ENCODE measurements at regions of chr10 and their contacts with region 1.

Region 1: DNA sequence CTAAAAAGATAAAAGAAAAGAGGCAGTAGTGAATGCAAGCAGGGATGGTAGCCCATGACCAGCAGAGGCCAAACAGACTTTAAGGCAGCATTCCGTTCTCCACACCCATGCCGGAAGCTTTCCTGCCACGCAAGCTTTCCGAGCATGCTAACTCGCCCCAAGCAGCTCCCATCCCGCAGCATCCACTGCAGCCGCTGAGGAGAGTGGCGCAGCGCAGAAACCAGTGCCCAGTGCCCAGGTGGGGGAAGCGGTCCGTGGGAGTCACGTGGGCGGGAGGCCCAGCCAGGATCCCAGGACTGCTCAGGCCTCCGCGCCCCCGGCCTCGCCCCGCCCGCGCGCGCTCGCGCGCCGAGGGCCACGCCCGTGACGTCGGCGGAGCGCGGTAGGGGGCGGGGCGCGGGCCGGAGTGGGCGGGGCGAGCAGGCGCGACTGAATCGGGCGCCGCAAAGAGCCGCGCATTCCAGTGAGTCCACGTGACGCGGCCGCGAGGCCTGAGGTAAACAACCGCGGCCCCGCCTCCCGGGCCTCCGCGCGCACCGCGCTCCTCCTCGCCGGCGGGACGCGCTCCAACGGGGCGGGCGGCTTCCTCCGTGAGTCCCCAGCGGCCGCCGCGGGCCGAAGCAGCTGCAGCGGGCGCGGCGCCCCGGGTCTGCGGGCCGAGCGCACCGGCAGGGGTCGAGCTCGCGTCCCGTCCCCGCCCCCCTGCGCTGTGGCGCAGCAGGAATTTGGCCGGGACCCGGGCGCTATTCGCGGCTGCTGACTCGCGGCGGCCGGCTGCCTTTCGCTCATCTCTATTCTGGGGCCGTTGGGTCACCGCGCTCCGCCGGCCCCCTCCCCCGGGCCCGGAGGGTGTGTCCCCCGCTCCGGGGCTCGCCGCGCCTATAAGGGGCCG is at the start of gene OTUD1:
- DNase-seq: peak; percentile 87 to 96 (median 93)
- ATAC-seq: peak; percentile 89
- H3K4me3 ChIP-seq: peak within 1 kb of the TSS; percentile 68 to 77
- H3K4me3 Mint-ChIP-seq: peak within 1 kb of the TSS; percentile 93
- H3K27ac ChIP-seq: peak within 1 kb of the TSS; percentile 82 to 90
- H3K27ac Mint-ChIP-seq: peak within 1 kb of the TSS; percentile 91
- H3K4me1 ChIP-seq: peaks cover 32% of the 10 kb centered on the region
- H3K4me1 Mint-ChIP-seq: peaks cover 37% of the 10 kb centered on the region
- H3K27me3 ChIP-seq: no peaks in the 10 kb centered on the region
- H3K27me3 Mint-ChIP-seq: no peaks in the 10 kb centered on the region
- CTCF ChIP-seq: no peak
- total RNA-seq, gene OTUD1: 78.9 to 81.3 TPM

Region 2: GRCh38 chr10:21533467-21534279 is 1905.1 kb before region 1 on chr10 and contains the start of gene MLLT10:
- CTCF ChIA-PET with region 1: no interaction called
- POLR2A ChIA-PET with region 1: no interaction called
- intact Hi-C with region 1: loop called (anchors 5 to 10 kb)
- DNase-seq: peak; percentile 83 to 98 (median 92)
- ATAC-seq: peak; percentile 84
- H3K4me3 ChIP-seq: peak within 1 kb of the TSS; percentile 69 to 81
- H3K4me3 Mint-ChIP-seq: peak within 1 kb of the TSS; percentile 96
- H3K27ac ChIP-seq: peak within 1 kb of the TSS; percentile 64 to 75
- H3K27ac Mint-ChIP-seq: peak within 1 kb of the TSS; percentile 94
- H3K4me1 ChIP-seq: peaks cover 16% of the 10 kb centered on the region
- H3K4me1 Mint-ChIP-seq: peaks cover 29% of the 10 kb centered on the region
- H3K27me3 ChIP-seq: no peaks in the 10 kb centered on the region
- H3K27me3 Mint-ChIP-seq: no peaks in the 10 kb centered on the region
- CTCF ChIP-seq: peak; percentile 22
- total RNA-seq, gene MLLT10: 36.7 to 41.0 TPM

Region 3: GRCh38 chr10:22325272-22326144 is 1113.3 kb before region 1 on chr10:
- CTCF ChIA-PET with region 1: no interaction called
- POLR2A ChIA-PET with region 1: no interaction called
- intact Hi-C with region 1: loop called in 1 of 2 experiments (anchors 5 kb)
- DNase-seq: peak in 8 of 9 experiments; percentile 62 to 92 (median 78)
- ATAC-seq: peak; percentile 26
- H3K4me3 ChIP-seq: peak overlapping the region; percentile 43 to 57
- H3K4me3 Mint-ChIP-seq: peak overlapping the region; percentile 80
- H3K27ac ChIP-seq: peak overlapping the region; percentile 46 to 51
- H3K27ac Mint-ChIP-seq: peak overlapping the region; percentile 88
- H3K4me1 ChIP-seq: peaks cover 33% of the 10 kb centered on the region
- H3K4me1 Mint-ChIP-seq: peaks cover 40% of the 10 kb centered on the region
- H3K27me3 ChIP-seq: peaks cover 20 to 21% of the 10 kb centered on the region in 2 experiments
- H3K27me3 Mint-ChIP-seq: peaks cover 38% of the 10 kb centered on the region
- CTCF ChIP-seq: no peak

Region 4: DNA sequence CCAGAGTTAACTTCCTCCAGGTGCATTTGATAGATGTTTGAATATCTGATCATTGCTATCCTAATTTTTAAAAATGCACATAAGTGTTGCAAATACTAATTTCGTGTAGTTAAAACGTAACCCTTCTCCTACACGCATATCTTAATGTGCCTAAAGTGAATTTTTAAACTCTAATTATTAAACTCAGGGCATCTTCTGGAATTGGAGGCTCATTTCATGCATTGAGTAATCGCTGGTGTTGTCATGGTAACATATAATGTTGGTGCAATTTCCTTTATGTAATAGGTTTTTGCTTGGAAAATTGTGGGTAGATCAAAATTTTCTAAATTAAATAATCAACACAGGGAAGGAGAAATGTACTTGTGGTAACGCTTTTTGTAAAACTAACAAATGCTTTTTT is 454.7 kb before region 1 on chr10:
- CTCF ChIA-PET with region 1: no interaction called
- POLR2A ChIA-PET with region 1: no interaction called
- intact Hi-C with region 1: no loop called
- DNase-seq: no peak
- ATAC-seq: no peak
- H3K4me3 ChIP-seq: no peak overlapping the region
- H3K4me3 Mint-ChIP-seq: no peak overlapping the region
- H3K27ac ChIP-seq: no peak overlapping the region
- H3K27ac Mint-ChIP-seq: no peak overlapping the region
- H3K4me1 ChIP-seq: peaks cover 4% of the 10 kb centered on the region
- H3K4me1 Mint-ChIP-seq: peaks cover 11% of the 10 kb centered on the region
- H3K27me3 ChIP-seq: peaks cover 0 to 2% of the 10 kb centered on the region in 2 experiments
- H3K27me3 Mint-ChIP-seq: peaks cover 5% of the 10 kb centered on the region
- CTCF ChIP-seq: no peak

Region 5: GRCh38 chr10:23053036-23053435 is 385.8 kb before region 1 on chr10:
- CTCF ChIA-PET with region 1: no interaction called
- POLR2A ChIA-PET with region 1: no interaction called
- intact Hi-C with region 1: no loop called
- DNase-seq: no peak
- ATAC-seq: no peak
- H3K4me3 ChIP-seq: no peak overlapping the region
- H3K4me3 Mint-ChIP-seq: no peak overlapping the region
- H3K27ac ChIP-seq: no peak overlapping the region
- H3K27ac Mint-ChIP-seq: no peak overlapping the region
- H3K4me1 ChIP-seq: no peaks in the 10 kb centered on the region
- H3K4me1 Mint-ChIP-seq: no peaks in the 10 kb centered on the region
- H3K27me3 ChIP-seq: no peaks in the 10 kb centered on the region
- H3K27me3 Mint-ChIP-seq: peaks cover 39% of the 10 kb centered on the region
- CTCF ChIP-seq: no peak

Region 6: DNA sequence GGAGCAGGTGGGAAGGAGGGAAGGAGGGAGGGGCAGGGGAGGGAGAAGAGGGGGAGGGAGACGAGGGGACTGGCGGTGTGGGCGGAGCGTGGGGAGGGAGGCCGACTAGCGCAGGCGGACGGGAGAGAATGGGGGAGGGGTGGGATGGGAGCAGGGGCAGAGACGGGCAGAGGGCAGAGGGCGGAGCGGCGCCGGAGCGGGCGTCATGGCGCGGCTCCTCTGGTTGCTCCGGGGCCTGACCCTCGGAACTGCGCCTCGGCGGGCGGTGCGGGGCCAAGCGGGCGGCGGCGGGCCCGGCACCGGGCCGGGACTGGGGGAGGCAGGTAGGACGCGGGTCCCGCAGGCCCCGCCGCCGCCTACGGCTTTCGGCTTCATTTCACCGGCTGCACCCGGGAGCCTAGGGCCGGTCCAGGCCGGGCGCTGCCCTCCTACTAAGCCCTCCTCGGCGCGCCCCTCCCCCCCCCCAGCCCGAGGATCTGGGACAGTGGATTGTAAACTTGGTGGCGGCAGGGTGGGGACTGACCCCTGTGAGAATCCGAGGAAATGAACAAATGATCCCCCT is 343.3 kb before region 1 on chr10 and contains the start of gene MSRB2:
- CTCF ChIA-PET with region 1: no interaction called
- POLR2A ChIA-PET with region 1: no interaction called
- intact Hi-C with region 1: loop called (anchors 5 to 10 kb)
- DNase-seq: peak; percentile 37 to 93 (median 69)
- ATAC-seq: peak; percentile 68
- H3K4me3 ChIP-seq: peak within 1 kb of the TSS; percentile 53 to 67
- H3K4me3 Mint-ChIP-seq: peak within 1 kb of the TSS; percentile 83
- H3K27ac ChIP-seq: peak within 1 kb of the TSS; percentile 44 to 61
- H3K27ac Mint-ChIP-seq: peak within 1 kb of the TSS; percentile 85
- H3K4me1 ChIP-seq: peaks cover 15% of the 10 kb centered on the region
- H3K4me1 Mint-ChIP-seq: peaks cover 28% of the 10 kb centered on the region
- H3K27me3 ChIP-seq: no peaks in the 10 kb centered on the region
- H3K27me3 Mint-ChIP-seq: no peaks in the 10 kb centered on the region
- CTCF ChIP-seq: no peak
- total RNA-seq, gene MSRB2: 1.0 to 1.1 TPM

Region 7: GRCh38 chr10:23344241-23344841 is 94.5 kb before region 1 on chr10 and contains the start of gene C10orf67:
- CTCF ChIA-PET with region 1: interaction called, 3 read pairs
- POLR2A ChIA-PET with region 1: interaction called, 3 read pairs
- intact Hi-C with region 1: loop called in 1 of 2 experiments (anchors 5 kb)
- DNase-seq: peak in 4 of 9 experiments; percentile 10 to 42 (median 26)
- ATAC-seq: peak; percentile 41
- H3K4me3 ChIP-seq: peak within 1 kb of the TSS; percentile 54 to 67
- H3K4me3 Mint-ChIP-seq: peak within 1 kb of the TSS; percentile 86
- H3K27ac ChIP-seq: no peak within 1 kb of the TSS
- H3K27ac Mint-ChIP-seq: peak within 1 kb of the TSS; percentile 24
- H3K4me1 ChIP-seq: peaks cover 7% of the 10 kb centered on the region
- H3K4me1 Mint-ChIP-seq: peaks cover 34% of the 10 kb centered on the region
- H3K27me3 ChIP-seq: peaks cover 0 to 3% of the 10 kb centered on the region in 2 experiments
- H3K27me3 Mint-ChIP-seq: peaks cover 10% of the 10 kb centered on the region
- CTCF ChIP-seq: no peak
- total RNA-seq, gene C10orf67: not detected

Region 8: GRCh38 chr10:24724381-24725228 is 1285.8 kb after region 1 on chr10:
- CTCF ChIA-PET with region 1: no interaction called
- POLR2A ChIA-PET with region 1: interaction called, 3 read pairs
- intact Hi-C with region 1: loop called in 1 of 2 experiments (anchors 10 kb)
- DNase-seq: peak; percentile 91 to 97 (median 96)
- ATAC-seq: peak; percentile 86
- H3K4me3 ChIP-seq: peak overlapping the region; percentile 80 to 93
- H3K4me3 Mint-ChIP-seq: peak overlapping the region; percentile 94
- H3K27ac ChIP-seq: peak overlapping the region; percentile 48 to 69
- H3K27ac Mint-ChIP-seq: peak overlapping the region; percentile 94
- H3K4me1 ChIP-seq: peaks cover 15% of the 10 kb centered on the region
- H3K4me1 Mint-ChIP-seq: peaks cover 24% of the 10 kb centered on the region
- H3K27me3 ChIP-seq: no peaks in the 10 kb centered on the region
- H3K27me3 Mint-ChIP-seq: no peaks in the 10 kb centered on the region
- CTCF ChIP-seq: no peak